Activated CD4-positive, alpha-beta memory T cell treated with anti-CD3 and anti-CD28 coated beads, Interleukin-2, amount 10 ng/mL, durations not matched to agents 7 days and 5 days (primary cell): ENCODE measurements at regions of chr20 and their contacts with region 1.

Region 1: GRCh38 chr20:833450-834150 is at the start of gene FAM110A:
- DNase-seq: peak; percentile 97
- H3K4me3 Mint-ChIP-seq: peak within 1 kb of the TSS; percentile 92
- H3K27ac Mint-ChIP-seq: peak within 1 kb of the TSS; percentile 84
- H3K4me1 Mint-ChIP-seq: peaks cover 58% of the 10 kb centered on the region
- H3K27me3 Mint-ChIP-seq: no peaks in the 10 kb centered on the region
- total RNA-seq, gene FAM110A: 34.7 to 35.9 TPM

Region 2: DNA sequence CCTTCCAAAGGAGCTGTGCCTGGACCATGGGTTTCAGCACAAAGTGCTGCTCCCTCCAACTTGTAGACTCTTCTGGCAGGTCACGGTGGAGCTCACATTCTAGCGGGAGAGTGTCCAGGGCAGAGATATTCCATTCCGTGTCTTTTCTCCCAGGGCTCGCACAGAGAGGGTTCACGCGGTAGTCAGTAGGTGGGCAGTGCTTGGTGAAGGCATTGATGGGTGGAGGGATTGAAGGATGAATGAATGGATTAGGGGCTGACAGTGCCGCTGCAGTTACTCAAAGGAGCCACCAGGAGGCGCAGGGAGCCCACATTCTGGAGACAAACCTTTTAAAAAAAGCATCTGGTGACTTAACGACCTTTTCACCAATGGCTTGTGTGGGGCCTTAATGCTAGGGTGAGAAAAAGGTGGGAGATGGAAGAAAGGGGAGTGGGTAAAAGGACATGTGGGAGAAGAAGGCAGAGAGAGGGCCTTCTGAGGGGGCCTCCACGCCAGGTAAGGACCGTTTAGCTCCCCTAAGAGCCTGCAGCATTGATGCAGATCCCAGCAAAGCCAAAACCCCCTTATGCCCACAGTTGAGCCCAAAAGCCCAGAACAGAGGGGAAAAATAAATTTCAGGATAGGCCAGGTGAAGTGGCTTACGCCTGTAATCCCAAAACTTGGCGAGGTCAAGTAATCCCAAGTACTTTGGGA is 17.5 kb before region 1 on chr20:
- CTCF ChIA-PET with region 1: interaction called, 11 read pairs
- POLR2A ChIA-PET with region 1: no interaction called
- DNase-seq: peak; percentile 73
- H3K4me3 Mint-ChIP-seq: no peak overlapping the region
- H3K27ac Mint-ChIP-seq: no peak overlapping the region
- H3K4me1 Mint-ChIP-seq: no peaks in the 10 kb centered on the region
- H3K27me3 Mint-ChIP-seq: peaks cover 21% of the 10 kb centered on the region

Region 3: DNA sequence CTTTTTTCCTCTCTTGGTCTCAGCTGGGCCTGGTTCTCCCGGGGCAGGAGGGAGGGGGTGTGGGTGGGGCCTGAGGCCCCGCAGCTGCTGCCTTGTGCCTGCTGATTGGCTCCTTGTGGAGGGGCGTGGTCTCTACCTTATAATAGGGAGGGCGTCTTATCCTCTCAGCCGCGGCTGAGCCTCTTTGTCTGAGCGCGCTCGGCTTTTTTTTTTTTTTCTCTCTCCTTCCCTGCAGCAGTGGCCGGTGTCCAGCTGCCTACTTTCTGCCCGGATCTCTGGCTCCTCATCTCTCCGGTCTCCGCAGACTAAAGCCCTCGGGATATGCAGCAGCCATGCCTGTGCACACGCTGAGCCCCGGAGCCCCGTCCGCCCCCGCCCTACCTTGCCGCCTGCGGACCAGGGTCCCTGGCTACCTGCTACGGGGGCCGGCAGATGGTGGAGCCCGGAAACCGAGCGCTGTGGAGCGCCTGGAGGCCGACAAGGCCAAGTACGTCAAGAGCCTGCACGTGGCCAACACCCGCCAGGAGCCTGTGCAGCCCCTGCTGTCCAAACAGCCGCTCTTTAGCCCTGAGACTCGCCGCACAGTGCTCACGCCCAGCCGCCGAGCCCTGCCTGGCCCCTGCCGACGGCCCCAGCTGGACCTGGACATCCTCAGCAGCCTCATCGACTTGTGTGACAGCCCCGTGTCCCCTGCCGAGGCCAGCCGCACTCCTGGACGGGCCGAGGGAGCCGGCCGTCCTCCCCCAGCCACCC is 11.0 kb after region 1 on chr20:
- CTCF ChIA-PET with region 1: interaction called, 14 read pairs
- POLR2A ChIA-PET with region 1: interaction called, 92 read pairs
- DNase-seq: peak; percentile 91
- H3K4me3 Mint-ChIP-seq: peak overlapping the region; percentile 89
- H3K27ac Mint-ChIP-seq: peak overlapping the region; percentile 69
- H3K4me1 Mint-ChIP-seq: peaks cover 54% of the 10 kb centered on the region
- H3K27me3 Mint-ChIP-seq: no peaks in the 10 kb centered on the region

Region 4: DNA sequence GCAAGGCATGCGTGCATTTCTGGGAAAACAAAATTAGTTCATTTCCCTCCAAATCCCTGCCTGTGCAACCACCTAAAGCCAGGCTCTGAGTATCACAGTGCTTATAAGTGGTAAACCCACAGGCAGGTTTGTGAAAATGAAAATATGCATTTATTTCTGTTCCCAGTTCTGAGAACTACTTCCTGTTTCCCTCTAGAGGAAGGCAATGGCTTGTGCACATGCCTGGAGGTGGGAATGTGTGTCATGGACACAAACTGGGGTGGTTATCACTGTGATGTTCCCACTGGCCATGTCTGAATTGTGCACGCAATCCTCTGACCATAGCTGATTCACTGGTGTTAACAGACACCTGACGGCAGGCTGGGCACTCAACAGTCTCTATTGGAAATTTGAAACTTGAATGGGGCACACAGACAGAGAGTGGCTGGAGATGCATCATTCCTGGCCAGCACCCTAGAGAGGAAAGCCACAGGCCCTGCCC is 26.2 kb after region 1 on chr20:
- CTCF ChIA-PET with region 1: interaction called, 3 read pairs
- POLR2A ChIA-PET with region 1: interaction called, 13 read pairs
- DNase-seq: no peak
- H3K4me3 Mint-ChIP-seq: no peak overlapping the region
- H3K27ac Mint-ChIP-seq: peak overlapping the region; percentile 74
- H3K4me1 Mint-ChIP-seq: peaks cover 66% of the 10 kb centered on the region
- H3K27me3 Mint-ChIP-seq: no peaks in the 10 kb centered on the region

Region 5: DNA sequence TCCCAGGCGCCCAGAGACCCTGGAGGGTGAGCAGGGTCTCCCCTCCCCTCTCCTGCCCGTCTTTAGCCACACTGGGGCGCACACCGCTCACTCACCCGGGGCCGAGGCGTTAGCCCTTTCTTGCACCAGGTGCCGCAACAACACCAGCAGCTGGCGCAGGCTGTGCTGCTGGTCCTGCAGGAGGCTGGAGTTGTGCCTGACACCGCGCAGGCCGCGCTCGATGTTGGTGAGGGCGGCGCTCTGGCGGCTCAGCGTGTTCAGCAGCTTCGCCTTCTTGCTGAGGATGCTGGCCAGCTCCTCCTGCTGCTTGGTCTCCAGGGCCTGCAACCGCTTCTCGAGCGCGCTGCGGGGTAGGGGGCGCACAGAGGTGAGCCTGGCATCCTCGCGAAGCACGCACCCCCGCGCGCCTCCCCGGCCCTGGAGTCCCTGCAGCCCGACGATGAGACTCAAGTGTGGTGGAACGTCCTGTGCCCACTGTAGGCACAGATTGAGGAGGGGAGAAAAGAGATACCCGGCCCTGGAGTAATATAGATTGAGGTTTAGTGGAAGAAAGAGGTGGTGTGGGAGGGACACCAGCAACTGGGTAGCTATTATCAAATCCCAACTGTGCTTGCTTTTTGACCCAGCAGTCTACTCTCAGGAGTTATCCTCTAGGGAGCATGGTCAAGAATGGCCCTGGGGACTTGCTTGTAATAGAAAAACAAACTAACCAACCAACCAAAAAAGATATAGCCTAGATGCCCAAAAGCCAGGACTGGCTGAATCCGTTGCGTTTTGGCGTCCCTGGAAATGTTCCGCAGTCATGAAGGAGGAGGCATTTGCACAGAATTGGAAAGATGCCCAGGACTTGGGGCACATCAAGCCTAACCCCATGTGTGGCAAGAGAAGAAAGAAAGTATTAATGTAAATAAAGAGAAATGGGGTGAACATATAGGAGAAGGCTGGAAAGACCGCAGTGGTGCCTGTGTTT is 51.7 kb after region 1 on chr20:
- CTCF ChIA-PET with region 1: no interaction called
- POLR2A ChIA-PET with region 1: no interaction called
- DNase-seq: no peak
- H3K4me3 Mint-ChIP-seq: no peak overlapping the region
- H3K27ac Mint-ChIP-seq: no peak overlapping the region
- H3K4me1 Mint-ChIP-seq: peaks cover 27% of the 10 kb centered on the region
- H3K27me3 Mint-ChIP-seq: peaks cover 14% of the 10 kb centered on the region

Region 6: DNA sequence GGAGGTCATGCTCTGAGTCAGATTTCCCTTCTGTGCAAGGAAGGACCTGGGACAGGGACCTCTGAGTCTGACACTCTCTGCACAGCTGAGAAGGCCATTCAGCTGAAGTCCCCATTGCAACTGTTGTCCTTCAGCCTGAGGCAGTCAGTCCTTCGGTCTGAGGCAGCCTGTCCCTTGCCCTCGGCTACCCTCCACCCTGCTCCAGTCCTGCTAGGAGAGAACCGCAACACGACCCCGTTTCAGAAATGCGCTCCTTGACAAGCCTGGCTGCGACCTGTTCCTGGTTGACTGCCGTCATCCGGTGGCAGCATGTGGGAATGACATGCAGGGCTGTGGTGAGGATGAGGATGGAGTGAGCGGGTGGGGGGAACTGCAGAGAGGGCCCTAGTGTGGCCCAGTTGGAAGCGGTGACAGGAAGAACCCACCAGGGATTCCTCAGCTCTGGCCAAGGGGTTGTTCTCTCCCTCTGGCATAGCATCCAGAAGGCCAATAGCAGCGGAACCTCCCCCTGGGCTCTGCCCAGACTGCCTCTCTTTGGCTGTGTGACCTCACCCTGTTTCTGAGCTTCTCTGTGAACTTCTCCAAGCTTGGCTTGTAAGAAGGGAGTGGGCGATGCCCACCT is 122.8 kb after region 1 on chr20:
- CTCF ChIA-PET with region 1: interaction called, 18 read pairs
- POLR2A ChIA-PET with region 1: no interaction called
- DNase-seq: peak; percentile 74
- H3K4me3 Mint-ChIP-seq: no peak overlapping the region
- H3K27ac Mint-ChIP-seq: no peak overlapping the region
- H3K4me1 Mint-ChIP-seq: no peaks in the 10 kb centered on the region
- H3K27me3 Mint-ChIP-seq: peaks cover 28% of the 10 kb centered on the region